ENCODE measurements at regions of chr16 and their contacts with region 1.

Region 1: GRCh38 chr16:15466886-15467781 is 32.7 kb downstream of the BMERB1 start:
- DNase-seq: no peak
- ATAC-seq: no peak
- H3K4me3 ChIP-seq: no peak overlapping the region
- H3K27ac ChIP-seq: no peak overlapping the region
- H3K4me1 ChIP-seq: no peaks in the 10 kb centered on the region
- H3K27me3 ChIP-seq: no peaks in the 10 kb centered on the region
- CTCF ChIP-seq: peak in 3 of 9 donors; percentile 10 to 25 (median 23)

Region 2: GRCh38 chr16:15529673-15530072 is 62.5 kb after region 1 on chr16:
- intact Hi-C with region 1: no loop called
- DNase-seq: no peak
- ATAC-seq: peak in 1 of 8 donors; percentile 38
- H3K4me3 ChIP-seq: no peak overlapping the region
- H3K27ac ChIP-seq: no peak overlapping the region
- H3K4me1 ChIP-seq: peaks cover 0 to 4% (median 0%) of the 10 kb centered on the region in 9 donors
- H3K27me3 ChIP-seq: no peaks in the 10 kb centered on the region
- CTCF ChIP-seq: no peak

Region 3: GRCh38 chr16:15548482-15548891 is 81.4 kb after region 1 on chr16:
- intact Hi-C with region 1: loop called in 1 of 10 experiments (anchors 10 kb)
- DNase-seq: no peak
- ATAC-seq: no peak
- H3K4me3 ChIP-seq: no peak overlapping the region
- H3K27ac ChIP-seq: no peak overlapping the region
- H3K4me1 ChIP-seq: peaks cover 0 to 11% (median 0%) of the 10 kb centered on the region in 9 donors
- H3K27me3 ChIP-seq: no peaks in the 10 kb centered on the region
- CTCF ChIP-seq: no peak

Region 4: GRCh38 chr16:15682105-15682570 is 215.0 kb after region 1 on chr16:
- intact Hi-C with region 1: no loop called
- DNase-seq: no peak
- ATAC-seq: peak in 1 of 8 donors; percentile 51
- H3K4me3 ChIP-seq: no peak overlapping the region
- H3K27ac ChIP-seq: no peak overlapping the region
- H3K4me1 ChIP-seq: no peaks in the 10 kb centered on the region
- H3K27me3 ChIP-seq: no peaks in the 10 kb centered on the region
- CTCF ChIP-seq: peak in 7 of 9 donors; percentile 6 to 54 (median 26)